Activated CD4-positive, alpha-beta memory T cell treated with anti-CD3 and anti-CD28 coated beads for 36 hours (primary cell): ENCODE measurements at regions of chr11 and their contacts with region 1.

Region 1: DNA sequence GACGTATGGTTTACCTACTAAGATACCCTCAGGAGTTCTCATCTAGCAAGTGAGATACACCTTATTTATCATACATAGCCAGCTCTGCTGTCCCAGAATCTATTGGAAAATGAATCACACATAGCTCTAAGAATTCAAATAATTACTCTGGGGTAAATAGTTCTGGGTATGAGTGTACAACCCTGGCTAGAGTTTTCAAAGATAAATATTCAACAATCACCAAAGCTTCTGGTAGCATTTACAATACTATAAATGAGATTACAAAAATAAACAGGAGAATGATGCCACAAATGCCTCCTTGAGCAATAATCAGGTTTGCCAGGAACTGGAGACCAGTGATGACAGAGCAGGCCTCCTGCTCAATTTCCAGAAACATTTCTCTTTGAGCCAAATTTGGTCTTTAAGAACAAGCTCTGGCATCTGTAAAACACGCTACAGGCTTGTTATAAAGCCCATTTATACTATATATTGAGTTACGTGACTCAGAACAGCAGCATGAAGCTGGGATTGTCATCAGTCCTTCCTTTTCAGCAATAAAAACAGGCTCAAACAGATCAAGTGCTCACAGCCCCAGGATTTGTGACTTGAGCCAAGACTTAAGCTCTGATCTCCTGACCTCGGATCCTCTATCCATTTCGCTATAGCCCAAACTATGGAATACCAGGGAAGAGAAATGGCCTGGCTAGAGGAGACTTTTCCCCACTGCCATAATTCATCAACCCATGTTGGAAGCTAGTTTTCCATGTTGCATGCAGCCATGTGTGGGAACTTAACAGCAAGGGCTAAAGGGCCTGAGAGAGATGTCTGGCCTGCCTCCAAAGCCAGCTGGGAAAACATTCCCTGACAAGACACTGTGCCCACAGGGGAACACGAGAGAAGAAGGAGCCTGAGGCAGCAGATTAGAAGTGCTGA is 19.7 kb downstream of the RAB30 start:
- DNase-seq: no peak
- H3K4me3 Mint-ChIP-seq: no peak overlapping the region
- H3K27ac Mint-ChIP-seq: peak overlapping the region; percentile 0
- H3K4me1 Mint-ChIP-seq: peaks cover 51% of the 10 kb centered on the region
- H3K27me3 Mint-ChIP-seq: no peaks in the 10 kb centered on the region

Region 2: GRCh38 chr11:83019888-83020579 is 32.0 kb before region 1 on chr11:
- CTCF ChIA-PET with region 1: no interaction called
- POLR2A ChIA-PET with region 1: no interaction called
- intact Hi-C with region 1: loop called (anchors 1 kb)
- DNase-seq: no peak
- H3K4me3 Mint-ChIP-seq: no peak overlapping the region
- H3K27ac Mint-ChIP-seq: no peak overlapping the region
- H3K4me1 Mint-ChIP-seq: peaks cover 14% of the 10 kb centered on the region
- H3K27me3 Mint-ChIP-seq: no peaks in the 10 kb centered on the region

Region 3: GRCh38 chr11:83097429-83098075 is 45.5 kb after region 1 on chr11:
- CTCF ChIA-PET with region 1: no interaction called
- POLR2A ChIA-PET with region 1: no interaction called
- intact Hi-C with region 1: no loop called
- DNase-seq: no peak
- H3K4me3 Mint-ChIP-seq: no peak overlapping the region
- H3K27ac Mint-ChIP-seq: no peak overlapping the region
- H3K4me1 Mint-ChIP-seq: no peaks in the 10 kb centered on the region
- H3K27me3 Mint-ChIP-seq: no peaks in the 10 kb centered on the region